Right cardiac atrium (tissue), 5 donors: ENCODE measurements at regions of chr20 and their contacts with region 1.

Region 1: DNA sequence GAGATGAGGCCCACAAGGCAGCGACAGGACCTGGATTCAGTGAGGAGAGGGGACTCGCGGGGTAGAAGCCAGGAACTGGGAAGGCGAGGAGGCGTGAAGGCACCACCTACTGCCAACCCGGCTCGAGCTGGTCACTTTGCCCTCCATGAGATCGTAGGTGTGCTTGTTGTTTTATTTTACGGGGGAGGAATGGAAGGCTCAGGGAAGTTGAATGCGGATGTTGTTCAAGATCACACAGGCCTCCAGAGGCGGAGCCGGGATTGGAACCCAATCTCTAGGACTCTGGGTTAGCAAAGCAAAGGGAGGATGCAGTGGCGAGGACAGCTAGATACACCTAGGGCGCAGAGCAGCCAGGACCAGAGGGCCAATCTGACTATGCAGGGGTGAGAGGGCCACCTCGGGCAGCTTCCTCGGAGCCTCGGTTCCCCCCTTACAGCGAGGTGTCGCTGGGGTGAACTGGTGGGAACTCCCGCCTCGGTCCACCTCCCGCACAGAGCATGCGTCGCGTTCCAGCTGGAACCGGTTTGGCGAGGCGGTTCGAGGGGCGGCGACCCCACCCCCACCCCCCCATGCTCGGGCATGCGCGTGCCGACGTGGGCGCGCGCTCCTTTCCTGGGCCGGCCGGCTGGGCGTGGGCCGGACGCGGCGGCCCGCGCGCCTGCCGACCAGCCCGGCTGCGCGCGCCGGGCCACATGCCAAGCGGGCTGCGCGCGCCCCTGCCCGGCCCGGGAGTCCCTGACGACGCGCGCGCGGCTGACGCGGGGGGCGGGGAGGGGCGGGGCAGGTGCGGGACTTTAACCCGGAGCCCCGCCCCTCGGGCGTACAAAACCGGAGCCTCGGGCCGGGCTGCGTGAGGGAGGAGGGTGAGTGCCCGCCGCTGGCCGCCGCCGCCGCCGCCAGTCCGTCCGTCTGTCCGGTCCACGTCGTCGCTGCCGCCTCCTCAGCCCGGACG is 80.4 kb upstream of the MYL9 start:
- DNase-seq: peak; percentile 94 to 97 (median 97)
- ATAC-seq: peak; percentile 66 to 83
- H3K4me3 ChIP-seq: peak overlapping the region; percentile 97
- H3K27ac ChIP-seq: peak overlapping the region; percentile 95
- H3K4me1 ChIP-seq: peaks cover 20% of the 10 kb centered on the region
- H3K27me3 ChIP-seq: no peaks in the 10 kb centered on the region

Region 2: GRCh38 chr20:36541227-36541763 is 80.4 kb after region 1 on chr20 and contains the start of gene MYL9:
- intact Hi-C with region 1: loop called in 3 of 4 experiments (anchors 5 kb)
- DNase-seq: peak; percentile 95 to 99 (median 98)
- ATAC-seq: peak; percentile 89 to 90
- H3K4me3 ChIP-seq: peak within 1 kb of the TSS; percentile 63
- H3K27ac ChIP-seq: peak within 1 kb of the TSS; percentile 64
- H3K4me1 ChIP-seq: peaks cover 9% of the 10 kb centered on the region
- H3K27me3 ChIP-seq: no peaks in the 10 kb centered on the region
- total RNA-seq, gene MYL9: 1,717 to 2,567 (median 2,144) TPM